AG04450 (cell line): ENCODE measurements at regions of chr11 and their contacts with region 1.

Region 1: DNA sequence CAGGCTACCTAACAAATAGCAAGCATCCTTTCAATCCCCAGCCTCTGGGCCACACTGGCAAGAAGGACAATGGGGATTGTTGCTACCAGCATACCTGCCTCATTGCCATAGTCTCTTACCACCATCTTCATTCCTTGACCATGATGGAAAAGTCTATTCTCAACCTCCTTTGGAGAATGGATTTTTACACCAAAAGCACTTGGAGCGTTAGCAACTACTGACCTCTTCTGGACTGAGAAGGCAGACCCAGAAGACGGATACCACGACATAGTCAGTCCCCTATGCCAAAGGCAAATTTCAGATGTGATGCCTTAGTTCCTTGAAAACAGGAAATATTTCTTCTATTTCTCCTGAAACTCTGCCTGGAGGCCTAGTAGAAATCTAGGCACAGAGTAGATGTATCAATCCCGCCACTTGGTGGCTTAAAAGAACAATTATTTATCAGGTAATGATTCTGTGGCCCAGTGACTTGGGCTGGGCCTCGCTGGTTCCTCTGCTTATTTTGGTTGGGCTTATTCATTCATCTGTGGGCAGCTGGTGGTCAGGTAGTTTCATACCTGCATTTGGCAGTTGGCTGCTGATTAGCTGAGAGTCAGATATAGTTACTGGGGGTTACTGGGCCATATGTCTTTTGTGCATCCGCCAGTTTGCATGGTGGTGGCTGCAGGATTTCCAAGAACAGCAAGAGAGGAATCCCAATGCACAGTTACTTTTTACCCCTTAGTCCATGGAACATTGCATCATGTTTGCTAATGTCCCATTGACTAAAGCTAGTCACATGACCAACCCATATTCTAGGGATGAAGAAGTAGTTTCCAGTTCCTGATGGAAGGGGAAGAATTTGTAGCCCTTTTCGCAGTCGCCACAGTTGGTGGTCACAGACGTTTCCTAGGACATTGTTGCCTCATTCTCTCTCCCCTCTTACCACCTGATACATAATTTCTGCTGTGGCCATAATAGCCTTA is 75.2 kb downstream of the DHCR7 start:
- DNase-seq: peak; percentile 1
- H3K4me3 ChIP-seq: no peak overlapping the region
- H3K27ac ChIP-seq: no peak overlapping the region
- H3K27me3 ChIP-seq: peaks cover 3% of the 10 kb centered on the region
- CTCF ChIP-seq: peak; percentile 63

Region 2: DNA sequence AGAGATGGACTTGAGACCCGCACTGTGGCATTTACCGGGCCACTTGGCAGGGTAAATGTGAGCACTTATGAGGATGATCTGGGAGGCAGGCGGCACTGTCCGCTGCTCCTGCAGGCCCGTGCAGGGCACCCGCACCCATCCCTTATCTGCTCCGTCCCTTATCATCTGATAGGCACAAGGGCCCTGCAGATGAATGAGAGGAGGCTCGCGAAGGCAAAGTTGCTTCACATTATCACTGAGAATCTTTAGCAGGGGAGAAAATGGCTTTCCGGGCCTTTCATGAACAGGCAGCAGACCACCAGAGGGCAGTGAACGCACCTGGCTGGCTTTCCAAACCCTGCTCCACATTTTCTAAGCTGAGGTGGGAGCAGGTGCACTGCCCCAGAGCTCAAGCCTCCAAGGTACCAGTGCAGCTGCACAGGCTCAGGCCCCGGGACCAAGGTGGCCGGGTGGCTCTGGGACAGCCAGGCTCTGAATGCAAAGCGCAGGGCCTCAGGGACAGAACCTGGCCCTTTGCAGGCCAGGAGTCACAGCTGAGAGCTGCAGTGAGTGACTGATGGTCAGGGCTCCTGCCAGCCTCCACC is 286.2 kb before region 1 on chr11:
- CTCF ChIA-PET with region 1: interaction called, 10 read pairs
- POLR2A ChIA-PET with region 1: no interaction called
- DNase-seq: no peak
- H3K4me3 ChIP-seq: no peak overlapping the region
- H3K27ac ChIP-seq: no peak overlapping the region
- H3K27me3 ChIP-seq: no peaks in the 10 kb centered on the region
- CTCF ChIP-seq: peak; percentile 59

Region 3: GRCh38 chr11:71298761-71299181 is 74.2 kb before region 1 on chr11:
- CTCF ChIA-PET with region 1: no interaction called
- POLR2A ChIA-PET with region 1: no interaction called
- DNase-seq: no peak
- H3K4me3 ChIP-seq: no peak overlapping the region
- H3K27ac ChIP-seq: peak overlapping the region; percentile 96
- H3K27me3 ChIP-seq: no peaks in the 10 kb centered on the region
- CTCF ChIP-seq: no peak

Region 4: DNA sequence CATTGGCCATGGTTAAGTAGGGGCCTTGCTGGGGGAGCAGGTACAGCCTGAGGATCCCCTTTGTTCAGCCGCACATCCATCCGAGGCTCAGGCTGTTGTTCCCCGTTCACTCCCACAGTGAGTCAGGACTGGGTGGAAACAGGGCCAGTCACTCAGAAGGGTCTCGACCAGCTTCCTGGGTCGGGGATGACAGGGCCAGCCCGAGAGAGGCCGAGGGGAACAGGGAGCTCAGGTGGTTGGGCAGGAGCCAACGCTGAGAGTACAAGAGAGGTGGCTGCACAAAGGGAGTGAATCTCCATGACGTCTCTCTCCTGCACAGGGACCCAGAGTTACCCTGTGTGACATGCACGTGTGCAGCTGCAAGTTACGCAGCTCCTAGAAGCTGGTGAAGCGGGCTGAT is 23.3 kb before region 1 on chr11:
- CTCF ChIA-PET with region 1: no interaction called
- POLR2A ChIA-PET with region 1: no interaction called
- DNase-seq: no peak
- H3K4me3 ChIP-seq: no peak overlapping the region
- H3K27ac ChIP-seq: no peak overlapping the region
- H3K27me3 ChIP-seq: peaks cover 5% of the 10 kb centered on the region
- CTCF ChIP-seq: no peak